Heart right ventricle (tissue), 16 donors: ENCODE measurements at regions of chr3 and their contacts with region 1.

Region 1: DNA sequence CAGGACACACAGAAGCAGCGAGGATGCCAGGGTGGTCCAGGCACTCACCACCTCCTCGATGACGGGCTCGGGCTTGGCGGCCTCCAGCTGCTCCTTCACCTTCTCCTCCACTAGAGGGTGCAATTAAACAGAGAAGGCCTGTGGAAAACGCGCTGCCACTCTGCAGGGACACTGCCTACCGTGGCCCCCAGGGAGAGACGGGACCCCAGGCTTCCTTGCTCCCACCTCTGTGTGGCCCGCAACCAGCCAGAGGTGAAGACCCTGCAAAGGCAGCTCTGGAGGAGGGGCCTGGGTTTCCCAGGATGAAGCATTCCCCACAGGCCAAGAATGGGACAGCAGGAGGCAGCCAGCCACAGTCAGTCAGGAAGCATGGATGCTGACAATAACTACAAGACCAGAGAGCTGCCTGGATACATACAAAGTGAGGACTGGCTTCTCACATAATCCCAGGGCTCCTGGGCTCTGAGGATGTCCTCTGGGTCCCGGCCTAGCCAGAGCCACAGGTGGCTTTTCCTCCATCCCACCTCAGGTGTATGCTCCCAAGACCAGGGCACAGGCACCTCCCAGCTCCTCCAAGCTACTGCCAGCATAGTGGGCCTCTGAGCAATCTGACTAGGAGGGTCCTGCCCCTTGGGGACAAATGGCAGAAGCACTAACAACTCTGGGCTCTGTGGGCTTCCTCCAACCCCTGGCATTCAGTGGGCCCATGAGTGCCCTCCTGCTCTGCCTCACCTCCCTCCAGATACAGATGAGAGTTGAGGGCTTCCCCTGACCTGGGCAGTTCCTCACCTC is 46.2 kb downstream of the PTH1R start:
- DNase-seq: no peak
- ATAC-seq: peak in 6 of 8 donors; percentile 29 to 60 (median 40)
- H3K4me3 ChIP-seq: no peak overlapping the region
- H3K27ac ChIP-seq: peak overlapping the region in 3 of 10 donors; percentile 7 to 53 (median 15)
- H3K4me1 ChIP-seq: peaks cover 12 to 60% (median 51%) of the 10 kb centered on the region in 9 donors
- H3K27me3 ChIP-seq: no peaks in the 10 kb centered on the region
- CTCF ChIP-seq: peak; percentile 37 to 77 (median 69)

Region 2: GRCh38 chr3:46903331-46904071 is 20.3 kb before region 1 on chr3:
- intact Hi-C with region 1: no loop called
- DNase-seq: no peak
- ATAC-seq: no peak
- H3K4me3 ChIP-seq: no peak overlapping the region
- H3K27ac ChIP-seq: no peak overlapping the region
- H3K4me1 ChIP-seq: peaks cover 3 to 26% (median 18%) of the 10 kb centered on the region in 9 donors
- H3K27me3 ChIP-seq: peaks cover 0 to 11% (median 3%) of the 10 kb centered on the region in 7 donors
- CTCF ChIP-seq: no peak

Region 3: DNA sequence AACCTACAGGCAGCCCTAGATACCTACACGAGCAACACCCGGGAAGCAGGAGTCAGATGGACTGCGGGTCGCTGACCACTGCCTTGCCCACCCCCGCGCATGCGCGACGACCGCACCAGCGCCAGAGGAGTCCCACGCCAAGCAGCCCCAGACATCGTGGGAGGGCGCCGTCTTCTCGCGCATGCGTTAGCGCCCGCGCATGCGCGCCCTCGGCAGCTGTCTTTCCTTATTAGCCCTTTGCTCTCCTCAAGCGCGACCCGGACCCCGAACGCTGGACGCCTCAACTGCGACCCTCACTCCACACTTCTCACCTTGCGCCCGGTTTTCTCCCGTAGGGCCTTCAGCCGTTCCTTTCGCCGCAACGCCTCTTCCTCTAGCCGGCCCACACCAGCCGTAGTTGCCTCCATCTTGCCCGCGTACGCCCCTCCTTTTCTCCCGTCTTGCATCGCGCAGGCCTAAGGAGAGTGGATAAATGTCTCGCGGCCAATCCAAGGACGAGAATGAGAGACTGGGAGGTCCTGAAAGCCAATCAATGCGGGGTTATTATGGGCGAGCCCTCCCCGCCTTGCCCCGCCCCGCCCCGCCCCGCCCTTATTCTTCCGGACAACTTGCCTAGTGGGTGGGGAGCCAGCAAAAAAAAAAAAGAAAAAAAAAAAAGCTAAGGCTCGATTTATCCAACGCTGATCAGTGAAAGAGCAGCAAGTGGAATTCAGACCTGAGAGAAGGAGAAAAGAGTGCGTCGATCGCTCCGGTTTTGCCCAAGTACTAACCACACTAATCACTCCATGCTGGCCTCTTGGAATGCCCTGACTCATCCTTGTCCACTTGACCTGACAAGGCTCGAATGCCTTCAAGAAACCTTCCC is 52.8 kb after region 1 on chr3 and contains the start of gene CCDC12:
- intact Hi-C with region 1: loop called in 3 of 10 experiments (anchors 2 to 5 kb)
- DNase-seq: peak; percentile 88 to 98
- ATAC-seq: peak; percentile 89 to 95 (median 92)
- H3K4me3 ChIP-seq: peak within 1 kb of the TSS; percentile 47 to 90 (median 80)
- H3K27ac ChIP-seq: peak within 1 kb of the TSS; percentile 69 to 96 (median 90)
- H3K4me1 ChIP-seq: peaks cover 3 to 78% (median 69%) of the 10 kb centered on the region in 9 donors
- H3K27me3 ChIP-seq: no peaks in the 10 kb centered on the region
- CTCF ChIP-seq: peak in 1 of 9 donors; percentile 10
- total RNA-seq, gene CCDC12: 28.8 to 39.9 (median 33.3) TPM

Region 4: DNA sequence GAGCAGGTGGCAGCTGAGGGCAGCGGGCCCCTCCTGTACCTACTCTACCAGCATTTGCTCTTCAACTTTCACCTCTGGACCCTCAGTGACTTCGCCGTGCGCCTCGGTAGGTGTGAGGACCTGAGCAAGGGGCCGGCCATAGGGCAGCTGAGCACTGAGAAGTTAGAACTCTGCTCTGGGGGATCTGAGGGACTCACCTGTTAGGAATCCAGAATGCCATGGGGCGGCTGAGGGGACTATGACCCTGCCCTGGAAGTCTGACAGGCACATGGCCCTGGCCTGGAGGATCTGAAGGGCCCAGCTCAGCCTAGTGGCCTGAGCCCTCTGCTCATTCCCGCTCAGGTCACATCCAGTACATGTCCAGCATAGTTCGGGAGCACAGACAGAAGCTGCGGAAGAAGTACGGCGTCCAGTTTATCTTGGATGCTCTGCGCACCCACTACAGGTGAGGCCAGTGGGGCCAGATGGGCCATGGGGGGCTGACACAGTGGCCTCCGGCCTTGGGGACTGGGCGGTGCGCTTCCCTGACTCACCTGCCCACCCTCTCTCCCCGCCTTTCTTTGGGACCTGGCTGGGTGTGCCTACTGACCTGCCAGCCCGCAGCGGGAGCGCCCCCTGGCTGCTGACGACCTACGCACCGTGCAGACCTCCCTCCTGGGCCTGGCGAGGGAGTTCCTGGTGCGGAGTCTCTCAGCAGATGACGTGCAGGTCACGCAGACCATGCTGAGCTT is 74.5 kb after region 1 on chr3:
- intact Hi-C with region 1: loop called (anchors 1 to 10 kb)
- DNase-seq: peak; percentile 65 to 78
- ATAC-seq: peak; percentile 63 to 87 (median 74)
- H3K4me3 ChIP-seq: no peak overlapping the region
- H3K27ac ChIP-seq: no peak overlapping the region
- H3K4me1 ChIP-seq: peaks cover 0 to 14% (median 0%) of the 10 kb centered on the region in 9 donors
- H3K27me3 ChIP-seq: no peaks in the 10 kb centered on the region
- CTCF ChIP-seq: peak; percentile 74 to 89 (median 83)

Region 5: GRCh38 chr3:47961815-47962618 is 1038.3 kb after region 1 on chr3:
- intact Hi-C with region 1: no loop called
- DNase-seq: no peak
- ATAC-seq: peak in 3 of 8 donors; percentile 15 to 40 (median 19)
- H3K4me3 ChIP-seq: no peak overlapping the region
- H3K27ac ChIP-seq: peak overlapping the region in 2 of 10 donors; percentile 18 to 36
- H3K4me1 ChIP-seq: peaks cover 6 to 49% (median 28%) of the 10 kb centered on the region in 9 donors
- H3K27me3 ChIP-seq: no peaks in the 10 kb centered on the region
- CTCF ChIP-seq: no peak